Dendritic cell treated with granulocyte-macrophage colony-stimulating factor and Interleukin-4, amounts not matched to agents 40 ng/mL and 50 ng/mL, for 4 days (primary cell): ENCODE measurements at regions of chr11 and their contacts with region 1.

Region 1: DNA sequence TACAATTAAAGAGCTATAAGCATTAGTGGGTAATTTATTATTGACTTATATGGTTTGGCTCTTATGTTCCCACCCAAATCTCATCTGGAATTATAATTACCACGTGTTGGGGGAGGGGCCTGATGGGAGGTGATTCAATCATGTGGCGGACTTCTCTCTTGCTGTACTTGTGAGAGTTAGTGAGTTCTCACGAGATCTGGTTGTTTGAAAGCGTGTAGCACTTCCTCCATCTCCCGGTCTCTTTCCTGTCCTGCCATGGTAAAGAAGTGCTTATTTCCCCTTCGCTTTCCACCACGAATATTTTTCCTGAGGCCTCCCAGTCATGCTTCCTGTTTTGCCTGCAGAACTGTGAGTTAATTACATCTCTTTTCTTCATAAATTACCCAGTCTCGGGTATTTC is 28.1 kb upstream of the CHORDC1 start:
- H3K4me3 Mint-ChIP-seq: no peak overlapping the region
- H3K27ac Mint-ChIP-seq: no peak overlapping the region
- H3K4me1 Mint-ChIP-seq: peaks cover 6% of the 10 kb centered on the region
- H3K27me3 Mint-ChIP-seq: peaks cover 1% of the 10 kb centered on the region

Region 2: DNA sequence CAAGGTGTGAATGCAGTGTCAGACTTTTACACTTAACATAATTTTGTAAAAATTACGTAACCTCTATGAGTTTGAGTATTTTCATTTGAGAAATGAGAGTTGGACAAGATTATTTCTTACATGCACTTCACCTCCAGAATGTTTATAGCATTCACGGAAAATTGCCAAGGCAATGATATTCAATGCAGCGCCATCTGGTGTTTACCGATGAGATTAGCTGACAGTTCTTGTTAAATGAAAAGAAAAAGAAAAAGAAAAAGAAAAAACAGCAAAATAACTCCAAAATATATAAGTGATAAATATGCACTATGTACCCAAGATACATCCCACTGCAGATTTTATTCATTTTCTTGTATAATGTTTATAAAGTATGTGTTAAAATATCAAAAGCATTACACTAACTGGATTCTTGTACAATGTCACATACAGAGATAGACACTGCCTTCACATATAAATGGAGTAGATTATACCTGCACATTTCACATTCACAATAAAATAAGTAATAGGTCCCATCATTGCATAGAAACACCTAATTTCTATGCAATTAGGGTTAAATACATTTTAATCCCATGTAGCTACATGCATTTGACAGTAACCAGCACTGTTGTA is 997.3 kb after region 1 on chr11:
- intact Hi-C with region 1: loop called (anchors 2 kb)
- H3K4me3 Mint-ChIP-seq: no peak overlapping the region
- H3K27ac Mint-ChIP-seq: no peak overlapping the region
- H3K4me1 Mint-ChIP-seq: no peaks in the 10 kb centered on the region
- H3K27me3 Mint-ChIP-seq: no peaks in the 10 kb centered on the region